Activated CD4-positive, alpha-beta T cell treated with anti-CD3 and anti-CD28 coated beads, Interleukin-2, amount 10 ng/mL, durations not matched to agents 7 days and 5 days (primary cell): ENCODE measurements at regions of chr10 and their contacts with region 1.

Region 1: GRCh38 chr10:62038609-62039190 is 137.2 kb downstream of the ARID5B start:
- DNase-seq: peak; percentile 87
- H3K4me3 Mint-ChIP-seq: peak overlapping the region; percentile 11
- H3K27ac Mint-ChIP-seq: peak overlapping the region; percentile 84
- H3K4me1 Mint-ChIP-seq: peaks cover 86% of the 10 kb centered on the region
- H3K27me3 Mint-ChIP-seq: no peaks in the 10 kb centered on the region

Region 2: DNA sequence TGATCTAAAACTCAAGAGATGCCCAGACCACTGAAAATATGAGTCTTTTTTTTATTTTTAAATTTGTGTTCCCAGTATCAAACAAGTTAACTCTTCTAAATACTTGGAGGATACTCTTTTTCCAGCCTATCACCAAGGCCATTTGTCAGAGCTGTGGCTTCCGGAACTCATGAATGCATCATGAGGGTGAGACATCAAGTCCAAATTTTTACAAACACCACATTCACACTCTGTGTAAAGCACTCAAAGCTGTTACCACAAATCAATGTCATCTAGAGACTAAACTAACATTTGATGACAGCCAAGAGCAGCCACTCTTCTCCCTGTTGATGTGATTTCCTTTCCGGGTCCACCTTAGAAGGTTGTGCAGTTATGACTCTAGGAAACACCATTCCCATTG is 181.0 kb before region 1 on chr10:
- CTCF ChIA-PET with region 1: no interaction called
- POLR2A ChIA-PET with region 1: no interaction called
- DNase-seq: no peak
- H3K4me3 Mint-ChIP-seq: no peak overlapping the region
- H3K27ac Mint-ChIP-seq: no peak overlapping the region
- H3K4me1 Mint-ChIP-seq: no peaks in the 10 kb centered on the region
- H3K27me3 Mint-ChIP-seq: no peaks in the 10 kb centered on the region

Region 3: DNA sequence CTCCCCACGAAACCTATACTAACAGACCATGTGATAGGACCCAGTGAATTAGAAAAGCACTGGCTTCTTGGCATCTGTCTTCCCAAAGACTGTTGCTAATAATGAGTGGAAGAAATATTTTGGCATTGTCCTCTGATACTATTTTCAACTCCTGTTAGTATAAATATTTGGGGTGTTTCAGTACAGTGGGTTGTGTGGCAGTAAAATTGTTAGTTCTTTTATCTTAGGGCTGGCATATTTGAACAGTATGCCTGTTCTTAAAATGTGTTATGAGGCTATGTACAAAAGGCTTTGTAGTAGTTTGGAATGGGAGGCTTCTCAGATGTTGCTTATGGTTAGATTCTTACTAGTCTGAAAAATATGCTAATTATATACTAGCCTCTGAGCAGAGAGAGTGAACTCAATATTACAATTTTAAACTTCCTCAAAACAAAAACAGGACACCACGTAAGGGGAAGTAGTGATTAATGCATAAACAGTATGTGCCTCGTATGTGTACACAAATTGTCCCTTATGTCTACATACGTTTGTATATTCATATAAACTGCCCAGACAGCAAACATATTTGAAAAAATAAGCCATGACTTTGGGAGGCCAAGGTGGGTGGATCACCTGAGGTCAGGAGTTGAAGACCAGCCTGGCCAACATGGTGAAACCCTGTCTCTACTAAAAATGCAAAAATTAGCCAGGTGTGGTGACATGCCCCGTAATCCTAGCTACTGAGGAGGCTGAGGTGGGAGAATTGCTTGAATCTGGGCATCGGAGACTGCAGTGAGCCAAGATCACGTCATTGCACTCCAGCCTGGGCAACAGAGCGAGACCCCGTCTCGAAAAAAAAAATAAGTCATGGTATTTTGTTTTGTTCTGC is 21.8 kb before region 1 on chr10:
- CTCF ChIA-PET with region 1: interaction called, 164 read pairs
- POLR2A ChIA-PET with region 1: no interaction called
- DNase-seq: no peak
- H3K4me3 Mint-ChIP-seq: no peak overlapping the region
- H3K27ac Mint-ChIP-seq: peak overlapping the region; percentile 6
- H3K4me1 Mint-ChIP-seq: peaks cover 54% of the 10 kb centered on the region
- H3K27me3 Mint-ChIP-seq: no peaks in the 10 kb centered on the region

Region 4: GRCh38 chr10:62214364-62214874 is 175.7 kb after region 1 on chr10:
- CTCF ChIA-PET with region 1: no interaction called
- POLR2A ChIA-PET with region 1: no interaction called
- DNase-seq: no peak
- H3K4me3 Mint-ChIP-seq: no peak overlapping the region
- H3K27ac Mint-ChIP-seq: no peak overlapping the region
- H3K4me1 Mint-ChIP-seq: peaks cover 2% of the 10 kb centered on the region
- H3K27me3 Mint-ChIP-seq: no peaks in the 10 kb centered on the region

Region 5: GRCh38 chr10:62244780-62245467 is 206.2 kb after region 1 on chr10:
- CTCF ChIA-PET with region 1: interaction called, 51 read pairs
- POLR2A ChIA-PET with region 1: interaction called, 3 read pairs
- DNase-seq: peak; percentile 78
- H3K4me3 Mint-ChIP-seq: no peak overlapping the region
- H3K27ac Mint-ChIP-seq: peak overlapping the region; percentile 76
- H3K4me1 Mint-ChIP-seq: peaks cover 37% of the 10 kb centered on the region
- H3K27me3 Mint-ChIP-seq: no peaks in the 10 kb centered on the region